WTC11 (cell line): ENCODE measurements at regions of chr1 and their contacts with region 1.

Region 1: GRCh38 chr1:161132410-161133219 is at the start of gene DEDD:
- DNase-seq: peak; percentile 90
- ATAC-seq: peak; percentile 83
- H3K4me3 Mint-ChIP-seq: no peak within 1 kb of the TSS
- H3K27ac Mint-ChIP-seq: peak within 1 kb of the TSS; percentile 88
- H3K4me1 Mint-ChIP-seq: peaks cover 27% of the 10 kb centered on the region
- H3K27me3 Mint-ChIP-seq: no peaks in the 10 kb centered on the region
- CTCF ChIP-seq: no peak
- total RNA-seq, gene DEDD: 39.2 to 43.3 TPM (median 40.0 TPM) in 3 replicates

Region 2: DNA sequence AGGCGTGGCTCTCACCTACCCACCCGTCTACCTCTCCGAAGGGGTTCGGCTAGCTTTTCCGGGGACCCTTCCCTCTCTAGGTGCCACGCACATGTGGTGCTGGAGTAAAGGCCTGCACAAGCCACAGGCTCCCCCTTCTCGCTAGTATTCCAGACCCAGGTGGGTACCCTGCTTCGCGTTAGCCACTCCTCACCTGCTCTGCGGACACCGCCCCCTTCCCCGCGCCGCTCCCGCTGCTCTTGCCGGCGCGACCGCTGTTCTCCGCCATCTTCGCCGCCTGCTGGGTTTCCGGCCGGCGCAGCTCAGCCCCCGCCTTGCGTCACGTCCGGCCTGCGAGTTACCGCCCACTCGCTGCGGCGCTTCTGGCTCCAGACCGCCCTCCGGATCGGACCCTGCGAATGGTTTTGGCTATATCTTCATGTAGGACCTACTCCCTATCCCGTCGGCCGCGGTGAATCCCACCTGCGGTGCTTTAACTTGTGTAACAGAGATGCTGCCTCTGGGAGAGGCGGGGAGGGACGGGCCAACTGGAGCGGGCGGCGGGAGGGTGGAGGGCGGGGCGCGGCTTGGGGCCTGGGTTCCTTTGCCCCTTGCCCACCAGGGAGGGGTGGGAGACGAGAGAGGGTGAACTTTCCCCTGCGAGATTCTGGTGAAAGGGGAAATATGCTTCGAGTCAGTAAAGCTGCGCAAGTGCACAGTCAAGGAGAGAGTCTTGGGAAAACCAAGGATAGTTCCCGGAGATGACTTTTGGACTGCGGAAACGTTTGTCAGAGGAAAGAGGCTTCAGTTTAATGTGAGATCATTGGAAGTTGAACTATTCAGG is 14.6 kb before region 1 on chr1 and contains the starts of genes NIT1 and PFDN2:
- CTCF ChIA-PET with region 1: interaction called, 18 read pairs
- POLR2A ChIA-PET with region 1: interaction called, 12 read pairs
- DNase-seq: peak; percentile 92
- ATAC-seq: peak; percentile 81
- H3K4me3 Mint-ChIP-seq: peak within 1 kb of the TSS; percentile 96
- H3K27ac Mint-ChIP-seq: peak within 1 kb of the TSS; percentile 94
- H3K4me1 Mint-ChIP-seq: peaks cover 28% of the 10 kb centered on the region
- H3K27me3 Mint-ChIP-seq: no peaks in the 10 kb centered on the region
- CTCF ChIP-seq: no peak
- total RNA-seq, gene NIT1: 44.4 to 47.2 TPM (median 46.5 TPM) in 3 replicates
- total RNA-seq, gene PFDN2: 91.0 to 95.4 TPM (median 92.6 TPM) in 3 replicates

Region 3: DNA sequence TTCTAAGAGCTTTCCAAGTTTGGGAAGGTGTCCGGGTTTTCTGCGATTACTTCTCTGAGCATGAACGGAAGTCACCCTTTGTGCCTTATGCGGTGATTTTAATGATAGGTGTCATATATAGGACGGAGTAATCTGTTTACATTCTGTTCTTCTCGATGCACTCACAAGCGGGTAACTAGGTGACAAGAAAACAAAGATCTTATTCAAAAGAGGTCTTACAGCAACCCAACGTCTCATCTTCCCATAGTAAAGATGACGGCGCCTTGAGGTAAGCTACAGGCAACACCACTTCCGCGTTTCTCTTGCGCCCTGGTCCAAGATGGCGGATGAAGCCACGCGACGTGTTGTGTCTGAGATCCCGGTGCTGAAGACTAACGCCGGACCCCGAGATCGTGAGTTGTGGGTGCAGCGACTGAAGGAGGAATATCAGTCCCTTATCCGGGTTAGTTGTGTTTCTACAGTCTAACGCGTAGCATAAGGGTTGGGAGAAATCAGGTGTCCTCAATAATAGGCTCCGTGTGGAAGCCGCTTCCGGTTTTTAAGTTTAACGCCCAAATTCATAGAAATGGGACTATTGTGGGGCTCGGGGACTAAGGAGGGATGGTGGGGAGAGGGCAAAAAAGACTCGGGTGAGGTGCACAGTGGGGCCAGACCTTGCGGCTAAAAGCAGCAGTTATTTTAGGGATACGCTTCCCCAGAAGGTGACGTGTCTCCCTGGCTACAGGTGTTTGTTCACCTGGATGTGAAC is 21.2 kb after region 1 on chr1 and contains the start of gene UFC1:
- CTCF ChIA-PET with region 1: interaction called, 4 read pairs
- POLR2A ChIA-PET with region 1: interaction called, 10 read pairs
- DNase-seq: peak; percentile 71
- ATAC-seq: peak; percentile 92
- H3K4me3 Mint-ChIP-seq: peak within 1 kb of the TSS; percentile 99
- H3K27ac Mint-ChIP-seq: peak within 1 kb of the TSS; percentile 100
- H3K4me1 Mint-ChIP-seq: peaks cover 17% of the 10 kb centered on the region
- H3K27me3 Mint-ChIP-seq: no peaks in the 10 kb centered on the region
- CTCF ChIP-seq: no peak
- total RNA-seq, gene UFC1: 56.2 to 61.2 TPM (median 60.7 TPM) in 3 replicates